CD8-positive, alpha-beta T cell (primary cell): ENCODE measurements at regions of chr9 and their contacts with region 1.

Region 1: GRCh38 chr9:73116031-73116430 is 35.6 kb upstream of the ANXA1 start:
- DNase-seq: no peak
- ATAC-seq: no peak
- H3K4me3 ChIP-seq: no peak overlapping the region
- H3K4me3 Mint-ChIP-seq: no peak overlapping the region
- H3K27ac ChIP-seq: no peak overlapping the region
- H3K27ac Mint-ChIP-seq: no peak overlapping the region
- H3K4me1 ChIP-seq: peaks cover 21% of the 10 kb centered on the region
- H3K4me1 Mint-ChIP-seq: peaks cover 23% of the 10 kb centered on the region
- H3K27me3 ChIP-seq: no peaks in the 10 kb centered on the region
- H3K27me3 Mint-ChIP-seq: no peaks in the 10 kb centered on the region
- CTCF ChIP-seq: no peak

Region 2: DNA sequence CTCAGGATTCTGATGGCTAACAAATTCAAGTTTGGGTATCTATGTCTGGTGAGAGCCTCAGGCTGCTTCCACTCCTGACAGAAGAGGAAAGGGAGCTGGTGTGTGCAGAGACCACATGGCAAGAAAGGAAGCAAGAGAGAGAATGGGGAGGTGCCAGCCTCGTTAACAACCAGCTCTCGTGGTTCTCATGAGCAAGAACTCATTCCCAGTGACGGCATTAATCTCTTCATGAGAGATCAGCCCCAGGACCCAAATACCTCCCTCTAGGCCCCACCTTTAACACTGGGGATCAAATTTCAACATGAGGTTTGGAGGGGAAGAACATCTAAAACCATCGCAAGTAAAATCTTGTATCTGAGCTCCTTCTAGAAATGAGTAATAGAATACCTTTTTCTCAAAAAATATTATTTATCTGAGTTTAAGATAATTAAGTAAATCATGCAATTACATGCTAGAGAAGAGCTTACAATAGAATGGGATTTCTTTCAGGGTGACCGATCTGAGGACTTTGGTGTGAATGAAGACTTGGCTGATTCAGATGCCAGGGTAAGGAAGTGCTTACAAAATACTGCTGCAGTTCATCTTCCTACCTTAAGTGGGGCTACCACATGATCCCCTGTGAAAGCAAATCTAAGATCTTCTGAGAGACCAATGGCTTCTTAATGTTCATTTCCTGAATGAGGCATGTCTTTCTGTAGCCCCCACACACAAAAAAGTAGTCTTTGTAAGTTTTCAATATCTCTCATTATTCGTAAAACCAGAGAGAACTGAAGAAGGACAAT is 47.1 kb after region 1 on chr9:
- CTCF ChIA-PET with region 1: no interaction called
- POLR2A ChIA-PET with region 1: no interaction called
- intact Hi-C with region 1: loop called in 1 of 2 experiments (anchors 5 kb)
- DNase-seq: peak in 2 of 9 experiments; percentile 35 to 57
- ATAC-seq: peak; percentile 75
- H3K4me3 ChIP-seq: no peak overlapping the region
- H3K4me3 Mint-ChIP-seq: no peak overlapping the region
- H3K27ac ChIP-seq: peak overlapping the region in 1 of 2 experiments; percentile 57
- H3K27ac Mint-ChIP-seq: peak overlapping the region; percentile 76
- H3K4me1 ChIP-seq: peaks cover 22% of the 10 kb centered on the region
- H3K4me1 Mint-ChIP-seq: peaks cover 39% of the 10 kb centered on the region
- H3K27me3 ChIP-seq: no peaks in the 10 kb centered on the region
- H3K27me3 Mint-ChIP-seq: no peaks in the 10 kb centered on the region
- CTCF ChIP-seq: no peak

Region 3: DNA sequence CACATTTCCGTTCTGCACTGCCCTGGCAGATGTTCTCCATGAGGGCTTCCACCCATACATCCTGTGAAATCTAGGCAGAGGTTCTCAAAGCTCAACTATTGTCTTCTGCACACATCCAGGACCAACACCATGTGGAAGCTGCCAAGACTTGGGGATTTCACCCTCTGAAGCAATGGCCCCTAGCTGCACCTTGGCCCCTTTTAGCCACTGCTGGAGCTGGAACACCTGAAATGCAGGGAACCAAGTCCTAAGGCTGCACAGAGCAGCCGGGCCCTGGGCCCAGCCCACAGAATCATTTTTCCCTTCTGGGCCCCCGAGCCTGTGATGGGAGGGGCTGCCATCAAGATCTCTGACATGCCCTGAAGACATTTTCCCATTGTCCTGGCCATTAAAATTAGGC is 264.4 kb after region 1 on chr9:
- CTCF ChIA-PET with region 1: no interaction called
- POLR2A ChIA-PET with region 1: no interaction called
- intact Hi-C with region 1: no loop called
- DNase-seq: no peak
- ATAC-seq: no peak
- H3K4me3 ChIP-seq: no peak overlapping the region
- H3K4me3 Mint-ChIP-seq: no peak overlapping the region
- H3K27ac ChIP-seq: no peak overlapping the region
- H3K27ac Mint-ChIP-seq: no peak overlapping the region
- H3K4me1 ChIP-seq: no peaks in the 10 kb centered on the region
- H3K4me1 Mint-ChIP-seq: no peaks in the 10 kb centered on the region
- H3K27me3 ChIP-seq: no peaks in the 10 kb centered on the region
- H3K27me3 Mint-ChIP-seq: no peaks in the 10 kb centered on the region
- CTCF ChIP-seq: no peak